Right cardiac atrium (tissue), 5 donors: ENCODE measurements at regions of chr9 and their contacts with region 1.

Region 1: DNA sequence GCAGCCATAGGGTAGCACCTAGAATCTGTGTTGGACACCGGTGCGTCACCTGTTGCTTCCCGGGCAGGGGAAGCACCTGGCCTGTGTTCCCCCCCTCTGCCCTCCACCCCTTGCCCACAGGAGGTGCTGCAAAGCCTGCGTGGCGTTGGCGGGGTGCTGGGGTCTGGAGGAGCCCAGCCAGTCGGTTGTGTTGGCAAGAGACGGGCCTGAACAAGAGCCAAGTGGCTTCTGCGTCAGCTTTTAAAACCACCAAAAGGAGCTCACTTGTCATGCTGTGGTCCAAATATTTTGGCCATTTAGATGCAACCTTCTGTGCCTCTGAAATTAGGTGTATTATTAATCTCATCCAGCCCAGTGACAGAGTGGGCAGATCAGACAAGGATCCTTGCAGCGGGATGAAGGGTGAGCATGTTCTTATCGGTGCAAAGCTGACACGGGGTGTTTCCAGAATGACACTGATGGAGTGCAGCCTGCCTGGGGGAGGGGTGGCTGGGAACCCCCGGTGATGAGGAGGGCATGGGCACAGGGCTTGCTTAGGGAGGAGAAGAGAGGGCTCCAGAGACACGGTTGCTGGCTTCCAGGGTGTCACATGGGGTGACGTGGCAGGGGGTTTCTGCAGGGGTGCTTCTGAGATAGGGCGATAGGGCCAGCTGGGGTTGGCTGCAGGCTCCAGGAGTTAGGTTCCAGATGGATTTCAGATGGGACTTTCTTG is 9.7 kb upstream of the RXRA start:
- DNase-seq: peak; percentile 74 to 91 (median 88)
- ATAC-seq: peak; percentile 33 to 51
- H3K4me3 ChIP-seq: no peak overlapping the region
- H3K27ac ChIP-seq: no peak overlapping the region
- H3K4me1 ChIP-seq: peaks cover 9% of the 10 kb centered on the region
- H3K27me3 ChIP-seq: no peaks in the 10 kb centered on the region

Region 2: DNA sequence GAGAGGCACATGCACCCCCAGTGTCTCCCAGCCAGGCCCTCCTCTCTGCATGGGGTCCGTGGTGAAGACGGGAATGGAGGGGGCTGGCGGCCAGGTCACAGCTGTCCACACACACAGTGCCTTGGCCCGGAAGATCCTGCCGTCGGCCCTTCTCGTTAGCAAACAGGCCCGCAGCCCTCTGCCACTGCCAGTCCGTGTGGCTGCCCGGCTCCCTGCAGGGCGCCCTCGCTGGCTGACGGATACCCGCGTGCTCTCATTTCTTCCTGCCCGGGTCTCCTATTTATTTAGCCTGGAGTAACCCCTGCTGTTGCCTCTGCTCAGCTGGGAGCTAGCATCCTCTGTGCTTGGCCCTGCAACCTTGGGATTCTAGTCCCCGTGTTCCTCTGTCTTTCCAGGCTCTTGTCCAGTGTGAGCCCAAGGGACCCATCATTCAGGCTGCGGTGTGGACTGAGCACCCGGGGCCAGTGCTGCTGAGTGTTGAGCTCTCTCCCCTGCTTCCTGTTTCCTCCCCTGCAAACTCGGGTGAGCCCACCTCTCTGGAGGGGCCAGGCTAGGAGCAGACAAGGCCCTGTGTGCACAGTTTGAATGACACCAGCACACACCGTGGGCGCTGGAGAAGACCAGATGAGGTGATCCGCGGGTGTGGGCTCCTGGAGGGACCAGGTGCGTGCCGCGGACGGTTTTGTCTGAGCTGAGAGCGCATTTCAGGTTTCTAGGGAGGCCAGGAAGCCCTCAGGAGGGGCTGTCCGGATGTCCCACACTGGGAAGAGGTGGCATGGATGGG is 137.6 kb before region 1 on chr9:
- intact Hi-C with region 1: loop called in 3 of 4 experiments (anchors 10 kb)
- DNase-seq: peak in 2 of 3 donors; percentile 73 to 77
- ATAC-seq: peak; percentile 8 to 15
- H3K4me3 ChIP-seq: no peak overlapping the region
- H3K27ac ChIP-seq: no peak overlapping the region
- H3K4me1 ChIP-seq: no peaks in the 10 kb centered on the region
- H3K27me3 ChIP-seq: no peaks in the 10 kb centered on the region